ENCODE measurements at regions of chr1 and their contacts with region 1.

Region 1: GRCh38 chr1:232630047-232630893 is at the start of gene SIPA1L2:
- DNase-seq: peak; percentile 93
- ATAC-seq: peak; percentile 96
- H3K4me3 Mint-ChIP-seq: peak within 1 kb of the TSS; percentile 73
- H3K27ac Mint-ChIP-seq: peak within 1 kb of the TSS; percentile 80
- H3K4me1 Mint-ChIP-seq: peaks cover 28% of the 10 kb centered on the region
- H3K27me3 Mint-ChIP-seq: peaks cover 11% of the 10 kb centered on the region
- total RNA-seq, gene SIPA1L2: 3.7 to 4.0 TPM

Region 2: DNA sequence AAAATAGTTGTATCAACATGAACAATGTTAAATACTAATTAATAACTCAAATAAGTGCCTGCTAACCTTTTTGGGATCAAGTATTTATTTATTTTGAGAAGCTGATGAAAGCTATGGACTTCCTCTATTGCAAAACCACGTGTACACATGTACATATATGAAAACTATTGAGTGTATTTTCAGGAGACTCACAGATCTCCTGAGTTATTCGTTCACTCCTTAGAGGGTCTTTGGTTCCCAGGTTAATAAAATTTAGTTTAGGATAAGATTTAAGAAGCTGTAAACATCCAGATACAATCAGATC is 873.2 kb before region 1 on chr1:
- CTCF ChIA-PET with region 1: no interaction called
- POLR2A ChIA-PET with region 1: no interaction called
- intact Hi-C with region 1: loop called in 1 of 2 experiments (anchors 5 kb)
- DNase-seq: no peak
- ATAC-seq: peak; percentile 42
- H3K4me3 Mint-ChIP-seq: no peak overlapping the region
- H3K27ac Mint-ChIP-seq: no peak overlapping the region
- H3K4me1 Mint-ChIP-seq: no peaks in the 10 kb centered on the region
- H3K27me3 Mint-ChIP-seq: no peaks in the 10 kb centered on the region

Region 3: DNA sequence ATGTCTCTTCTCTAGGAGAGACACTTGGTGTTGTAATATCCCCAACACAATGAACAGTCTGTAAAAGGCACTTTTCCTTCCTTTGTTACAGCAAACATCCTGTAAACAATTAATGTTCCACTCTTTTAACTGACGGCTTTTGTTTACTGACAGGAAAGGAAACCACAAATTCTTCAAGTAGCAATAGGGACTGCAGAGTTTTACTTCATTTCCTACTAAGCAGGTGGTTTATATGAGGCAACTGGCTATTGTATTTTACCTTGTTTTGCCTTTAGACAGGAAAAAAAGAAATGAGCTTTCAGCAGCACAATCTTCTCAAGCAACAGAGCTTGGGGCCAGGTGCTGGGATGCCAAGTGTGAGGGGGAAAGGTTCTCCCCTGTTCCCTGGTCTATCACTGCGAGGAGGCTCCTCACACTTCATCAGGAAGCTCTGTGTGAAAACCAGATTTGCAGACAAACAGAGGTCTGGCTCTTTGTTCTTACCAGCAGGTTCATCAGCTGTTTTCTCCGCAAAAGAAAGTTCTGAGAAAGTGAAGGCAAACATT is 51.5 kb before region 1 on chr1:
- CTCF ChIA-PET with region 1: interaction called, 5 read pairs
- POLR2A ChIA-PET with region 1: no interaction called
- intact Hi-C with region 1: loop called in 1 of 2 experiments (anchors 2 kb)
- DNase-seq: no peak
- ATAC-seq: no peak
- H3K4me3 Mint-ChIP-seq: peak overlapping the region; percentile 40
- H3K27ac Mint-ChIP-seq: peak overlapping the region; percentile 66
- H3K4me1 Mint-ChIP-seq: peaks cover 53% of the 10 kb centered on the region
- H3K27me3 Mint-ChIP-seq: no peaks in the 10 kb centered on the region

Region 4: GRCh38 chr1:232596666-232597303 is 33.5 kb before region 1 on chr1:
- CTCF ChIA-PET with region 1: no interaction called
- POLR2A ChIA-PET with region 1: no interaction called
- intact Hi-C with region 1: no loop called
- DNase-seq: no peak
- ATAC-seq: no peak
- H3K4me3 Mint-ChIP-seq: no peak overlapping the region
- H3K27ac Mint-ChIP-seq: peak overlapping the region; percentile 39
- H3K4me1 Mint-ChIP-seq: peaks cover 25% of the 10 kb centered on the region
- H3K27me3 Mint-ChIP-seq: no peaks in the 10 kb centered on the region

Region 5: GRCh38 chr1:232805269-232806185 is 175.3 kb after region 1 on chr1 and contains the start of gene MAP10:
- CTCF ChIA-PET with region 1: no interaction called
- POLR2A ChIA-PET with region 1: no interaction called
- intact Hi-C with region 1: loop called (anchors 2 to 10 kb)
- DNase-seq: peak; percentile 89
- ATAC-seq: peak; percentile 92
- H3K4me3 Mint-ChIP-seq: peak within 1 kb of the TSS; percentile 79
- H3K27ac Mint-ChIP-seq: peak within 1 kb of the TSS; percentile 86
- H3K4me1 Mint-ChIP-seq: peaks cover 23% of the 10 kb centered on the region
- H3K27me3 Mint-ChIP-seq: peaks cover 3% of the 10 kb centered on the region
- total RNA-seq, gene MAP10: 1.4 to 1.5 TPM

Region 6: GRCh38 chr1:233025157-233025915 is 395.1 kb after region 1 on chr1:
- CTCF ChIA-PET with region 1: interaction called, 3 read pairs
- POLR2A ChIA-PET with region 1: no interaction called
- intact Hi-C with region 1: loop called (anchors 5 to 10 kb)
- DNase-seq: peak; percentile 34
- ATAC-seq: no peak
- H3K4me3 Mint-ChIP-seq: no peak overlapping the region
- H3K27ac Mint-ChIP-seq: no peak overlapping the region
- H3K4me1 Mint-ChIP-seq: no peaks in the 10 kb centered on the region
- H3K27me3 Mint-ChIP-seq: no peaks in the 10 kb centered on the region

Measured in activated CD4-positive, alpha-beta T cell treated with anti-CD3 and anti-CD28 coated beads for 36 hours (primary cell).